ENCODE measurements at regions of chr3 and their contacts with region 1.

Region 1: GRCh38 chr3:171838218-171838761 is 4.9 kb upstream of the TMEM212 start:
- DNase-seq: peak; percentile 90
- ATAC-seq: peak; percentile 64
- H3K4me3 ChIP-seq: peak overlapping the region in 1 of 3 experiments; percentile 19; a peak in 1 of 6 replicates
- H3K27ac ChIP-seq: peak overlapping the region; percentile 100
- H3K4me1 ChIP-seq: peaks cover 97% of the 10 kb centered on the region
- H3K27me3 ChIP-seq: no peaks in the 10 kb centered on the region
- CTCF ChIP-seq: 0 out of 2 replicates have a peak, but pooled peaks have one; percentile 13
- EP300 ChIP-seq: peak; percentile 17 to 79; a peak in 2 of 4 replicates
- POLR2A ChIP-seq: 0 out of 4 replicates have a peak, but pooled peaks of 1 of the 2 experiments have one; percentile 33
- RAD21 ChIP-seq: no peak

Region 2: DNA sequence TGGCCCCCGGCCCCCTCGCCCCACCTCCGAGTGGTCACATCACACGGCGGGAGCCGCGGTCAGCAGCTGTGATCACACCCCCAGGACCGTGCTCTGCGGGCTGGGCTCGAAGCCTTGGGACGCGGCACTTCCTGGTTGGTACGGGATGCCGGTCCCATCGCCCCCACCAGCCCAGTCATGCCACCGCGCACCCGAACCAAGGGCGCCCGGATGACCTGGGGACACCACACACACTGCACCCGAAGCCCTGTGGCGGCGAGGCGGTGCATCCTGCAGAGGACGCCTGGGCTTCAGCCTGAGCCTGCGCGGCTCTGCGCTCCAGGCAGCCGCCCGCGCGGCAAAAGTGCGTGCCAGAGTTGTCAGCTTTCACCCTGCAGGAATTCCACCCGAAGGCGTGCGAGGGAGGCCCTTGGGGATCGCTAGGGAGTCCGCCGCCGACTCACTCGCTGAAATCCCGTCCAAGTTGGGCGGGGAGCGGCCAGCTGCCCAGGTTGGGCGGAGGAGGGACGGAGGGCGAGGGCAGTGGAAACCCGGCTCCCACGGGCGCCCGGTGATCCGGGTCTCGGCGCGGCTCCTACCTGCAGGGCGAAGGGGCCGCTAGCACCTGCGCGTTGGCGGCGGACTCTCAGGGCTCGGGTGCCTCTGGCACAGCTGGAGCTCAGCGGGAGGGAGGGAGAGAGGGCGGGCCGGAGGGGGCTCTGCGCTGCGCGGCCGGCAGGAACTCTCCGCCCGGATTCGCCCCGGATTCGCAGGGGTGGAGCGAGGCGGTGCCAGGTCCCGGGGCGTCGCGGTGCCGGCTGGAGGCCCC is 28.3 kb before region 1 on chr3 and contains the start of gene PLD1:
- CTCF ChIA-PET with region 1: no interaction called
- POLR2A ChIA-PET with region 1: interaction called, 91 read pairs
- in situ Hi-C with region 1: no loop called
- intact Hi-C with region 1: no loop called
- DNase-seq: peak; percentile 77
- ATAC-seq: peak; percentile 87
- H3K4me3 ChIP-seq: peak within 1 kb of the TSS; percentile 73 to 91 (median 85)
- H3K27ac ChIP-seq: peak within 1 kb of the TSS; percentile 96
- H3K4me1 ChIP-seq: peaks cover 62% of the 10 kb centered on the region
- H3K27me3 ChIP-seq: no peaks in the 10 kb centered on the region; a peak in 1 of 5 replicates
- CTCF ChIP-seq: peak; percentile 38
- EP300 ChIP-seq: peak in 1 of 2 experiments; percentile 66; a peak in 1 of 4 replicates
- POLR2A ChIP-seq: peak in 1 of 2 experiments; percentile 75; a peak in 2 of 4 replicates
- RAD21 ChIP-seq: peak; percentile 40
- total RNA-seq, gene PLD1: 27.1 and 33.6 TPM in 2 replicates

Region 3: GRCh38 chr3:171883257-171883892 is 45.1 kb after region 1 on chr3:
- CTCF ChIA-PET with region 1: no interaction called
- POLR2A ChIA-PET with region 1: interaction called, 49 read pairs
- in situ Hi-C with region 1: no loop called
- intact Hi-C with region 1: loop called (anchors 1 kb)
- DNase-seq: peak; percentile 92
- ATAC-seq: peak; percentile 89
- H3K4me3 ChIP-seq: peak overlapping the region in 2 of 3 experiments; percentile 22 to 49; a peak in 2 of 6 replicates
- H3K27ac ChIP-seq: peak overlapping the region; percentile 96
- H3K4me1 ChIP-seq: peaks cover 66% of the 10 kb centered on the region
- H3K27me3 ChIP-seq: no peaks in the 10 kb centered on the region
- CTCF ChIP-seq: no peak
- EP300 ChIP-seq: peak; percentile 21 to 97; a peak in 2 of 4 replicates
- POLR2A ChIP-seq: 0 out of 4 replicates have a peak, but pooled peaks of 1 of the 2 experiments have one; percentile 29
- RAD21 ChIP-seq: no peak

Region 4: DNA sequence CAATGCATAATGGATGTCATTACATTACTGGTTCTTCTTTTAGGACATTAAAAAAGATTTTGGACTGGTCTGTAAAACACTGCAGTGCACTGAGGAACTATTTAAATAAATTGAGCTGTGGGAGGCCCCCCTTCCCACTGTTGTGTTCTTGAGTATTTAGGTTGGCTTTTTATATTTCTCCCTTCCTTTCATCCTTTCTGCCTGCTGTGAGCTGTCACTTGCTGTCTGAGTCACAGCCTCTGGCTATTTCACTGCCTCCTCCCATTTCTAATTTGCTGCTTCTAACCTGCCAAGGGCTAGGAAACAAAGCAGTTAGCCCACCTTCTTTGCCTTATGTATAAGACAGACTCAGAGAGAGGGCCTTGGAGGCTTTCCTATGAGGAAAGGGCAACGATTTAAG is 112.1 kb after region 1 on chr3:
- CTCF ChIA-PET with region 1: no interaction called
- POLR2A ChIA-PET with region 1: interaction called, 12 read pairs
- in situ Hi-C with region 1: no loop called
- intact Hi-C with region 1: loop called (anchors 10 kb)
- DNase-seq: peak; percentile 35
- ATAC-seq: peak; percentile 42
- H3K4me3 ChIP-seq: no peak overlapping the region
- H3K27ac ChIP-seq: peak overlapping the region; percentile 33
- H3K4me1 ChIP-seq: peaks cover 72% of the 10 kb centered on the region
- H3K27me3 ChIP-seq: no peaks in the 10 kb centered on the region
- CTCF ChIP-seq: no peak
- EP300 ChIP-seq: no peak
- POLR2A ChIP-seq: no peak
- RAD21 ChIP-seq: no peak

Region 5: GRCh38 chr3:172102123-172102882 is 264.0 kb after region 1 on chr3:
- CTCF ChIA-PET with region 1: no interaction called
- POLR2A ChIA-PET with region 1: interaction called, 18 read pairs
- in situ Hi-C with region 1: no loop called
- intact Hi-C with region 1: no loop called
- DNase-seq: no peak
- ATAC-seq: peak; percentile 58
- H3K4me3 ChIP-seq: peak overlapping the region in 1 of 3 experiments; percentile 39; a peak in 2 of 6 replicates
- H3K27ac ChIP-seq: peak overlapping the region; percentile 84
- H3K4me1 ChIP-seq: peaks cover 100% of the 10 kb centered on the region
- H3K27me3 ChIP-seq: no peaks in the 10 kb centered on the region
- CTCF ChIP-seq: no peak
- EP300 ChIP-seq: no peak
- POLR2A ChIP-seq: peak; percentile 14 to 33; a peak in 2 of 4 replicates
- RAD21 ChIP-seq: no peak

Measured in HepG2 (cell line).